ENCODE measurements at regions of chr15 and their contacts with region 1.

Region 1: DNA sequence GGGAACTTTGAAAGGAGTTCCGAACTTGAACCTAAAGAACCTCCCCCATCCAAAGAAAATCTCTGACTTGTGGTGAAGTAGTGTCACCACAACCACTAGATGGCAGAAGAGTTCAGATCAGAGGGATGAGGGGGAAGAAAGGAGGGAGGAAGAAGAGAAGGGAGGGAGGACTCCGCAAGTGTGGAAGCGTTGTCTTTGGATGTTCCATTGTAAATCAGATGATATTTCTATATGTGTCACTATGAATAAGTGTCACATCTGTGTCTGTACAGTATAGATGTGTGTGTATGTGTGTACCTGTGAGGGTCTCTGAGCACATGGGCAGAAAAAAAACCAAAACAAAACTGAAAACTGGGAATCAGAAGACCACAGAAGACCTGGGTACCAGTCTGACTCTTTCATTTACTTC is 16.9 kb downstream of the SLC24A1 start:
- DNase-seq: no peak
- ATAC-seq: peak; percentile 77 to 83

Region 2: DNA sequence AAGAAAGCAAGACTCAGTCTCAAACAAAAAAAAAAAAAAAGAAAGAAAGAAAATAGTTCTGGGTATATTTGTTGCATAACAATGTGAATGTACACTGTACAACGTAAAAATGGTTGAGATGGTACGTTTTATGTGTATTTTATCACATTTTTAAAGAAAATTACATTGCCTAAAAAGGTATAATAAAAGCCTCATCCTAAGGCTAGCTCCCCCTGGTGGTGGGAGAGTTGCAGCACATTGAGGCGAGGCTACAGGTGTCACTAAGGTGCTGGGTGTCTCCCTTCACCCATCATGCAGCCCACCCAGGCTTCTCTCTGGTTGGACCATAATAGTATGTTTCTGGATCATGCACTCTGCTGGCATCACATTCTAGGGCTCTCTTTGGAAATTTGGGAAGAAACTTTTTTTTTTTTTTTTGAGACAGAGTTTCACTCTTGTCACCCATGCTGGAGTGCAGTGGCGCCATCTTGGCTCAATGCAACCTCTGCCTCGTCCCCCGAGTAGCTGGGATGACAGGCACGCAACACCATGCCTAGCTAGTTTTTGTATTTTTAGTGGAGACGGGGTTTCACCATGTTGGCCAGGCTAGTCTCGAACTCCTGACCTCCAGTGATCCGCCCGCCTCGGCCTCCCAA is 218.3 kb after region 1 on chr15:
- intact Hi-C with region 1: loop called in 1 of 2 experiments (anchors 2 kb)
- DNase-seq: peak; percentile 68
- ATAC-seq: peak in 1 of 2 donors; percentile 49

Measured in left cardiac atrium (tissue), 4 donors.